Ascending aorta (tissue), 2 donors: ENCODE measurements at regions of chr3 and their contacts with region 1.

Region 1: GRCh38 chr3:152937234-152937633 is 102.3 kb downstream of the P2RY1 start:
- DNase-seq: no peak
- H3K4me3 ChIP-seq: no peak overlapping the region
- H3K27ac ChIP-seq: no peak overlapping the region
- H3K4me1 ChIP-seq: no peaks in the 10 kb centered on the region
- H3K27me3 ChIP-seq: no peaks in the 10 kb centered on the region
- CTCF ChIP-seq: peak; percentile 17 to 45 (median 31)

Region 2: DNA sequence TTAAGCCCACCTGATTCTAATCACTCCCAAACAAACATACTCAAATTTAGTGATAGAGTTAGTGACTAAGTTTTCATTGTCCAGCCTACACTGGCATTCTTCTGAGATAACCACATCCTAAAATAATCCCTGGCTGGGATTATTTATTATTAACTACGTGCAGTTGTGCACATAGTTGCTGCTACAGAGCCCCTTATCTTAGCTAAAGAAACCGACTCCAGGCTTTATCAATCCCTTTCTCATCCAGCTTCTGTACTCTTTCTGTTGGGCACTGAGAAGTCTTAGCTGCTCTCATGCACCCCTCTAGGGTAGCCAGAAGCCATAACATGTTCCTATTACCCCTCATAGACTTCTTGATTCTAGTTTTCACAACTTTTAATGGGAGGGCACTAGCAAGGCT is 459.8 kb before region 1 on chr3:
- intact Hi-C with region 1: loop called (anchors 5 kb)
- DNase-seq: no peak
- H3K4me3 ChIP-seq: no peak overlapping the region
- H3K27ac ChIP-seq: peak overlapping the region; percentile 30 to 41
- H3K4me1 ChIP-seq: peaks cover 0 to 2% of the 10 kb centered on the region in 2 donors
- H3K27me3 ChIP-seq: no peaks in the 10 kb centered on the region
- CTCF ChIP-seq: no peak